Psoas muscle (tissue), 8 donors: ENCODE measurements at regions of chr20 and their contacts with region 1.

Region 1: GRCh38 chr20:45823949-45824835 is 2.9 kb downstream of the TNNC2 start:
- DNase-seq: peak; percentile 65 to 80
- ATAC-seq: peak in 3 of 4 donors; percentile 40 to 55 (median 42)
- H3K4me3 ChIP-seq: peak overlapping the region; percentile 81
- H3K27ac ChIP-seq: peak overlapping the region; percentile 98
- H3K4me1 ChIP-seq: peaks cover 38% of the 10 kb centered on the region
- H3K27me3 ChIP-seq: no peaks in the 10 kb centered on the region
- CTCF ChIP-seq: peak; percentile 52

Region 2: GRCh38 chr20:45880988-45881788 is 57.0 kb after region 1 on chr20 and contains the start of gene ZSWIM1:
- intact Hi-C with region 1: loop called in 1 of 2 experiments (anchors 2 kb)
- DNase-seq: peak; percentile 99
- ATAC-seq: peak; percentile 97 to 99 (median 98)
- H3K4me3 ChIP-seq: peak within 1 kb of the TSS; percentile 64
- H3K27ac ChIP-seq: peak within 1 kb of the TSS; percentile 72
- H3K4me1 ChIP-seq: peaks cover 18% of the 10 kb centered on the region
- H3K27me3 ChIP-seq: no peaks in the 10 kb centered on the region
- CTCF ChIP-seq: no peak
- total RNA-seq, gene ZSWIM1: 6.1 to 10.0 (median 7.7) TPM

Region 3: GRCh38 chr20:45946149-45946970 is 122.2 kb after region 1 on chr20:
- intact Hi-C with region 1: loop called in 1 of 2 experiments (anchors 5 kb)
- DNase-seq: peak; percentile 80 to 82
- ATAC-seq: peak; percentile 66 to 84 (median 76)
- H3K4me3 ChIP-seq: no peak overlapping the region
- H3K27ac ChIP-seq: peak overlapping the region; percentile 77
- H3K4me1 ChIP-seq: peaks cover 27% of the 10 kb centered on the region
- H3K27me3 ChIP-seq: no peaks in the 10 kb centered on the region
- CTCF ChIP-seq: no peak

Region 4: GRCh38 chr20:45963059-45964005 is 139.1 kb after region 1 on chr20:
- intact Hi-C with region 1: loop called (anchors 5 kb)
- DNase-seq: peak in 1 of 2 donors; percentile 48
- ATAC-seq: peak in 3 of 4 donors; percentile 47 to 66 (median 48)
- H3K4me3 ChIP-seq: no peak overlapping the region
- H3K27ac ChIP-seq: no peak overlapping the region
- H3K4me1 ChIP-seq: peaks cover under 1% of the 10 kb centered on the region
- H3K27me3 ChIP-seq: no peaks in the 10 kb centered on the region
- CTCF ChIP-seq: peak; percentile 44